ENCODE measurements at regions of chr3 and their contacts with region 1.

Region 1: GRCh38 chr3:128426128-128426921 is 40.4 kb downstream of the DNAJB8 start:
- DNase-seq: peak; percentile 62 to 83
- H3K4me3 ChIP-seq: peak overlapping the region; percentile 47
- H3K4me3 Mint-ChIP-seq: peak overlapping the region; percentile 16
- H3K27ac Mint-ChIP-seq: no peak overlapping the region
- H3K4me1 ChIP-seq: no peaks in the 10 kb centered on the region
- H3K4me1 Mint-ChIP-seq: no peaks in the 10 kb centered on the region
- H3K27me3 ChIP-seq: no peaks in the 10 kb centered on the region
- H3K27me3 Mint-ChIP-seq: no peaks in the 10 kb centered on the region
- CTCF ChIP-seq: peak; percentile 49 to 80

Region 2: GRCh38 chr3:128170805-128171516 is 255.4 kb before region 1 on chr3:
- CTCF ChIA-PET with region 1: no interaction called
- POLR2A ChIA-PET with region 1: no interaction called
- intact Hi-C with region 1: loop called (anchors 1 kb)
- DNase-seq: peak; percentile 81 to 83
- H3K4me3 ChIP-seq: no peak overlapping the region
- H3K4me3 Mint-ChIP-seq: no peak overlapping the region
- H3K27ac Mint-ChIP-seq: peak overlapping the region; percentile 20
- H3K4me1 ChIP-seq: peaks cover 32% of the 10 kb centered on the region
- H3K4me1 Mint-ChIP-seq: peaks cover 22% of the 10 kb centered on the region
- H3K27me3 ChIP-seq: no peaks in the 10 kb centered on the region
- H3K27me3 Mint-ChIP-seq: no peaks in the 10 kb centered on the region
- CTCF ChIP-seq: peak; percentile 76 to 93

Region 3: DNA sequence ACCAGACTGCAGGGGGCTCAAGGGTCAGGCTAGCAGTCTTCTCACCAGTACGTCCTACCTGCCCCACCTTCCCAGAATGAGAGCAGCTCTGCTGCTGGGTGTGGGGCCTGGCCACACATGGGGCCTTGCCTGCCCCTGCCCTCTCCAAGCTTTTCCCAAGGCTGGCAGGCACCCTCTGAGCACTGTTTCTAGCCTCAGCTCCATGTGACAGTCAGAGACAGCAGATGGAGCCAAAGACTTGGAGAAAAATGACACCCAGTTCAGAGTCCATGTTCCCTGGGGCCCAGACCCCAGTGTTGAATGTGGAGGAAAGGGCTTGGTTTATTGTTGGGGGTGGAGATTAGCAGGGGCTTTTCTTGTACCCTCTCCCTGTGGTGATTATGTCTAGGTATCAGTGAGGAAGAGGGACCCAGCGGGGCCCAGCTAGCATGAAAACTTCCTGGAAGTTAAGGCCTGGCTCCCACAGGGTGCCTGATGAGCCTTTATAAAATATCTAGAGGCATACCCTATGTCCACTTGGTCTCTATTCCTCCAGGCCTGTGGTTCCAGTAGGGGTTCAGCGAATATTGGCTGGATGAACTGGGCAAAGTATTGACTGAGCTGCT is 119.2 kb before region 1 on chr3:
- CTCF ChIA-PET with region 1: interaction called, 4 read pairs
- POLR2A ChIA-PET with region 1: no interaction called
- intact Hi-C with region 1: loop called (anchors 2 kb)
- DNase-seq: peak; percentile 51 to 52
- H3K4me3 ChIP-seq: no peak overlapping the region
- H3K4me3 Mint-ChIP-seq: no peak overlapping the region
- H3K27ac Mint-ChIP-seq: no peak overlapping the region
- H3K4me1 ChIP-seq: peaks cover 9% of the 10 kb centered on the region
- H3K4me1 Mint-ChIP-seq: no peaks in the 10 kb centered on the region
- H3K27me3 ChIP-seq: no peaks in the 10 kb centered on the region
- H3K27me3 Mint-ChIP-seq: no peaks in the 10 kb centered on the region
- CTCF ChIP-seq: peak; percentile 21 to 65

Region 4: GRCh38 chr3:128487813-128488635 is 61.7 kb after region 1 on chr3:
- CTCF ChIA-PET with region 1: interaction called, 3 read pairs
- POLR2A ChIA-PET with region 1: no interaction called
- intact Hi-C with region 1: loop called (anchors 2 kb)
- DNase-seq: peak; percentile 93 to 94
- H3K4me3 ChIP-seq: peak overlapping the region; percentile 71
- H3K4me3 Mint-ChIP-seq: peak overlapping the region; percentile 93
- H3K27ac Mint-ChIP-seq: peak overlapping the region; percentile 89
- H3K4me1 ChIP-seq: peaks cover 11% of the 10 kb centered on the region
- H3K4me1 Mint-ChIP-seq: no peaks in the 10 kb centered on the region
- H3K27me3 ChIP-seq: no peaks in the 10 kb centered on the region
- H3K27me3 Mint-ChIP-seq: no peaks in the 10 kb centered on the region
- CTCF ChIP-seq: no peak

Region 5: DNA sequence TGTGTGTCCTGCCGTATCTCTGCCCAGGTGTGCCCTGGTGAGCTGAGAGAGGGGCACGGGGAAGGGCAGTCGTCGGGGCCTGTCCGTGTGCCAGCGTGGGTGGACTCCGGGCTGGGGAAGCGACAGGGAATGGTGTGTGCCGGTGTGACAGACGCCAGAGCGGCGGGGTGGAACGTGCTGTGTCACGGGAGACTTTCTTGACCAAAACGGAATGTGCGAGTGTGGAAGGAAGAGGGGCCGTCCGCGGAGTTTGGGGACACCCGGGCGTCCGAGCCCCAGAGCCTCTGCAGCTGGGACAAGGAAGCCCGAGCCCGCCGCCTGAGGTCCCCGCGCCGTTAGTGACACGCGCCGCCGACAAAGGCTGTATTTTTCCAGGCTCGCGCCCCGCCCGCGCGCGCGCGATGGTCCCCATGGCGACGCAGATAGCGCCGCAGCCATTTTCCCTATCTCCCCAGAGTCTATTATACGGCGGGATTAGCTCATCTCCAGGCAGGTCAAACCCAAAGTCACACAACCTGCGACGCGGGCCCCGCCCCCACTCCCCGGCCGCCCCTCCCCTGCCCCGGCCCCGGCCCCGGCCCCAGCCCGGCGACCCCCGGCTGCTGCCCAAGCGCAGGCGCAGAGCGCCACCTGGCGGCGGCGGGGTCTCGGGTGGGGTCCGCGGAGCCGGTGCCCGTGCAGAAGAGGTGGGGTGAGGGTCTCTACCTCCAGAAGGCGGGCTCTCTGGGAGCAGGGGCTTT is 71.2 kb after region 1 on chr3:
- CTCF ChIA-PET with region 1: interaction called, 9 read pairs
- POLR2A ChIA-PET with region 1: interaction called, 3 read pairs
- intact Hi-C with region 1: loop called (anchors 1 kb)
- DNase-seq: peak; percentile 83 to 87
- H3K4me3 ChIP-seq: peak overlapping the region; percentile 47
- H3K4me3 Mint-ChIP-seq: peak overlapping the region; percentile 79
- H3K27ac Mint-ChIP-seq: peak overlapping the region; percentile 58
- H3K4me1 ChIP-seq: peaks cover 8% of the 10 kb centered on the region; the same call in 1 of the 2 replicates
- H3K4me1 Mint-ChIP-seq: peaks cover 13% of the 10 kb centered on the region
- H3K27me3 ChIP-seq: no peaks in the 10 kb centered on the region
- H3K27me3 Mint-ChIP-seq: no peaks in the 10 kb centered on the region
- CTCF ChIP-seq: peak; percentile 82 to 83

Region 6: DNA sequence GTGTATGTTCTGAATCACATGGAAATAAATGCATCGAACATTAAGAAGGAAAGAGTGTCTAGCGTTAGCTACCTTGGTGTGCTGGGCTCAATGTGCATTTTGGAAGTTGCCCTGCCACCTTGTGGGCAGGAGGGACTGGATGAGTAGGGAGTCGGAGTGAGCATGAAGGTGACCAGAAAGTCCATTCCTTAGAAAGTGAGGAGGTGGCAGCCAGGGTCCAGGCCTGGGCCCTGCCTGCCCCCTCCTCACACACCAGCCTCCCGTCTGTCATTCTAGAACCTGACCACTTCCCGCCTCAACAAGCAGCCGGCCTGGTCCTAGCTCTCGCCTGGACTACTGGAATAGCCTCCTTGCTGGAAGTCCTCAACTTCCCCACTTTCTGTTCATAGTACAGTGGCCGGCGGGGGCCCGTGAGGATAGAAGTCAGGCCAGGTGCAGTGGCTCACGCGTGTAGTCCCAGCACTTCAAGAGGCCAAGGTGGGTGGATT is 76.9 kb after region 1 on chr3:
- CTCF ChIA-PET with region 1: interaction called, 3 read pairs
- POLR2A ChIA-PET with region 1: no interaction called
- intact Hi-C with region 1: loop called (anchors 2 kb)
- DNase-seq: peak in 1 of 2 experiments; percentile 54
- H3K4me3 ChIP-seq: no peak overlapping the region
- H3K4me3 Mint-ChIP-seq: no peak overlapping the region
- H3K27ac Mint-ChIP-seq: no peak overlapping the region
- H3K4me1 ChIP-seq: peaks cover 16% of the 10 kb centered on the region
- H3K4me1 Mint-ChIP-seq: peaks cover 8% of the 10 kb centered on the region
- H3K27me3 ChIP-seq: no peaks in the 10 kb centered on the region
- H3K27me3 Mint-ChIP-seq: no peaks in the 10 kb centered on the region
- CTCF ChIP-seq: peak in 1 of 2 experiments; percentile 59

Region 7: DNA sequence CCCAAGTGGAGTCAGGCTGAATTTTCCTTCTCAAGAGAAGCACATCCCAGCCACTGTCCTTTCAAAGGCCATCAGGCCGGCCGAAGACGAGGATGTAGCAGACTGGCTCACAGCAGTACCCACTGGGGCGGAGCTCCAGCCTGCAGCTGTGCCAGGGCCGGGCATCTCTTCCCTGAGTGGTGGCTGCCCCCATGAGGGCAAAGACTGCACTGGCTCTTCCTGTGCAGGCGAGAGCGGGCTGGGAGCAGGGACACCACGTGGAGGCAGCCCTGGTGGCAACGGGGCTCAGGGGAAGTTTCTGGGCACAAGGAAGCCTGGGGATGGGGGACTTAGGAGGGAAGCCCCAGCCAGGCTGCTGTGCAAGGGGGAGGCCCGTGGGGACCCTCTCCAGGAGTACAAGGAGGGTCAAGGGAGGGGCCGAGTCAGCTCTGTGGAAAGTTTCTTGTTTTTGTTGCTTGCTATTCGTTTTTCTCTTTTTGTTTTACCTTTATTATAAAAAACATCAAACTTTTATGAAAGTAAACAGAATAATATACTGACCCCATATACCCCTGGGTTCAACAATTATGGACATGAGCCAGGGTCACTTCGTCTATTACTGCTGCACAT is 158.2 kb after region 1 on chr3:
- CTCF ChIA-PET with region 1: no interaction called
- POLR2A ChIA-PET with region 1: no interaction called
- intact Hi-C with region 1: loop called (anchors 10 kb)
- DNase-seq: peak; percentile 39 to 50
- H3K4me3 ChIP-seq: no peak overlapping the region
- H3K4me3 Mint-ChIP-seq: no peak overlapping the region
- H3K27ac Mint-ChIP-seq: no peak overlapping the region
- H3K4me1 ChIP-seq: peaks cover 4% of the 10 kb centered on the region; the same call in 1 of the 2 replicates
- H3K4me1 Mint-ChIP-seq: no peaks in the 10 kb centered on the region
- H3K27me3 ChIP-seq: no peaks in the 10 kb centered on the region
- H3K27me3 Mint-ChIP-seq: no peaks in the 10 kb centered on the region
- CTCF ChIP-seq: peak in 1 of 2 experiments; percentile 27